Activated B cell treated with CpG ODN at 0.5 μM for 24 hours (primary cell): ENCODE measurements at regions of chr22 and their contacts with region 1.

Region 1: DNA sequence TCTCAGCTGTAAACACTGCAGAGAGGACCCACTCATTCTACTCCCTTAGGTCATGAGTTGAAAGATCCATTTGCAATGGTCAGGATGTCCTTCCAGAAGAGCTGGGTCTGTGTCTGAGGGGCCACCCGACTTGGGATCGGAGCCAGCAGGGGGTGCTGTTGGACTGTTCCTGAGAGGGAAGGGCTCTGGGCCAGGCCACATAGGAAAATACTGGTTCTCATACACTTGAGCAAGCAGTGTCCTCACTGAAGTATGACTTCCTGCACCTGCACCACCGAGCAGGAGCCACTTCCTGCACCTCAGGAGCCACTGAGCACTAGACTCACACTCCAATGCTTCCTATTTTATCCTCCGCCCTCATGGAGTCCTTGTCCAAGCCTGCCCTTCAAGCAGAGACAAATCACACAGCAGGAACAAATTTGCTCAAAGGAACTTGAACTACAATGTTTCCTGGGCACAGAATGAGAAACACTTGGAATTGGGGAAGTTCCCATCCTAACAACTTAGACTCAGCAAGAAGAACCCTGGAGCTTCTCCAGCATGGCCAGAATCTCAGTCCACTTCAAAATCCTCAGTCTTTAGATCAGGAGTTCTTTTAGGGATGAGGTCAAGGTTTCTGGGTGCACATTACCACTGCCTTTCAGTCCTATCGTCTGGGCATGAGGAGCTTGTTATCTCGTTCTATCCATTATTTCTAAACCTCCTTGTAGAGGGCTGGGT is 36.6 kb upstream of the VPREB1 start:
- DNase-seq: peak; percentile 80
- ATAC-seq: peak; percentile 83
- H3K4me3 Mint-ChIP-seq: peak overlapping the region; percentile 70
- H3K27ac Mint-ChIP-seq: peak overlapping the region; percentile 90
- H3K4me1 Mint-ChIP-seq: peaks cover 56% of the 10 kb centered on the region
- H3K27me3 Mint-ChIP-seq: no peaks in the 10 kb centered on the region
- CTCF ChIP-seq: no peak

Region 2: GRCh38 chr22:21690401-21690801 is 517.6 kb before region 1 on chr22:
- CTCF ChIA-PET with region 1: no interaction called
- POLR2A ChIA-PET with region 1: no interaction called
- intact Hi-C with region 1: no loop called
- DNase-seq: no peak
- ATAC-seq: no peak
- H3K4me3 Mint-ChIP-seq: no peak overlapping the region
- H3K27ac Mint-ChIP-seq: peak overlapping the region; percentile 36
- H3K4me1 Mint-ChIP-seq: peaks cover 14% of the 10 kb centered on the region
- H3K27me3 Mint-ChIP-seq: no peaks in the 10 kb centered on the region
- CTCF ChIP-seq: no peak

Region 3: DNA sequence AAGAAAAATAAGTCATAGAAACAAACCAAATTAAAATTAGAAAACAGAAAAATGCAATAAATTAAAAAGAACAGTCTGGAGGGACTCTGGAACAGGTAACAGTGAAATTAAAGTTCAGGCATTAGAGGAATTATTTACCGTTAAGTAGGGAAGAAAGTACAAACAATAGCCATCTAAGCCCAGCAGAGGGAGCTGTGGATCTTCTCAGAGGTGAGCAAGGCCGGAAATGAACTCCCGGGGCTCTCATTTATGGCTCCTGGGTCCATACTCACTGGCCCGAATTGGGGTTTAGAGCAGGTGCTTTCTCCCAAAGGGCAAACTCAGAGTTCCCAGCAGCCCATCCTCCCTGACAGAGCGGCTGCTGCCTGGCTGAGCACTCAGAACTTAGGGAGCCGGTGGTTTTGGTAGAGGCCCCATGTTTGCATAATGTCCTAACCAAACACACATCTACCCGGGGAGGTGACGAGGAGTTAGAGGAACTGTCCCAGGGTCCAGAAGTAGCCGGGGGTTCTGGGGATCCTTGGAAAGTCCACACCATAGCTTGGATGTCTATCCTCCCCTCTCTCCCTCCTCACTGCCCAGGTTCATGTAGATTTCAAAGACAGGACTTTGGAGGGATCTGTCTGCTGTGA is 51.2 kb before region 1 on chr22:
- CTCF ChIA-PET with region 1: interaction called, 36 read pairs
- POLR2A ChIA-PET with region 1: interaction called, 9 read pairs
- intact Hi-C with region 1: loop called (anchors 1 kb)
- DNase-seq: peak; percentile 64
- ATAC-seq: peak; percentile 75
- H3K4me3 Mint-ChIP-seq: peak overlapping the region; percentile 78
- H3K27ac Mint-ChIP-seq: peak overlapping the region; percentile 98
- H3K4me1 Mint-ChIP-seq: peaks cover 52% of the 10 kb centered on the region
- H3K27me3 Mint-ChIP-seq: no peaks in the 10 kb centered on the region
- CTCF ChIP-seq: peak; percentile 81

Region 4: DNA sequence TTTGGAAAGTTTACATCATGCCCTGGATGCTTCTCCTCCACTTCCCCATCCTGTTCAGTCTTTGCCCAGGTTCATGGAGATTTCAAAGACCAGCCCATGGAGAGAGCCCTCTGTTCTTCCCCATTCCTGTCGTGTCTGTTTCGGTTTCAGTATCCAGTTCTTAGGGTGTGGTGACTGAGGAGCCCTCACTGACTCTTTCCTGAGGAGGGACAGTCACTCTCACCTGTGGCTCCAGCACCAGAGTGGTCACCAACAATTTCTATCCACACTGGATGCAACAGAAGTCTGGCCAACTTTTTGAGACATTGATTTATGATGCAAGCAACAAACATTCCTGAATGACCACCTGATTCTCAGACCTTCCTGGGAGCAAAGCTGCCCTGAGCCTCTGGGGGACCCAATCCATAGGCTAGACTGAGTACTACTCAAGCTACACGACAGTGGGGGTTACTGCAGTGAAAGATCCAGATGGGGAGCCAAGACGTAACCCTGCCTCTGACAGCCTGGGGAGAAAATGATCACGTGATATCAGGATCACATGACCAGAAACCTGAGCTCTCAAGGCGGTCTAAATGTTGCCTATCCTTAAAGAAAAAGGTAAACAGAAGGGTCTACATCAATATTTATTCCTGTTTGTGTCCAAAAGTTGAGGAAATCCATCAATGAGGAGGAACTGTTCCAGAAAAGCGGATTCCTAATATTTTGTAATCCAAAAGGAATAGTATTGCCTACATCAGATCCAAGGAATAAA is 39.6 kb before region 1 on chr22:
- CTCF ChIA-PET with region 1: interaction called, 22 read pairs
- POLR2A ChIA-PET with region 1: interaction called, 21 read pairs
- intact Hi-C with region 1: no loop called
- DNase-seq: peak; percentile 31
- ATAC-seq: peak; percentile 54
- H3K4me3 Mint-ChIP-seq: peak overlapping the region; percentile 84
- H3K27ac Mint-ChIP-seq: peak overlapping the region; percentile 97
- H3K4me1 Mint-ChIP-seq: peaks cover 86% of the 10 kb centered on the region
- H3K27me3 Mint-ChIP-seq: no peaks in the 10 kb centered on the region
- CTCF ChIP-seq: no peak

Region 5: GRCh38 chr22:22219140-22219996 is 11.4 kb after region 1 on chr22:
- CTCF ChIA-PET with region 1: interaction called, 3 read pairs
- POLR2A ChIA-PET with region 1: no interaction called
- intact Hi-C with region 1: loop called (anchors 2 kb)
- DNase-seq: no peak
- ATAC-seq: no peak
- H3K4me3 Mint-ChIP-seq: no peak overlapping the region
- H3K27ac Mint-ChIP-seq: no peak overlapping the region
- H3K4me1 Mint-ChIP-seq: peaks cover 42% of the 10 kb centered on the region
- H3K27me3 Mint-ChIP-seq: no peaks in the 10 kb centered on the region
- CTCF ChIP-seq: no peak

Region 6: DNA sequence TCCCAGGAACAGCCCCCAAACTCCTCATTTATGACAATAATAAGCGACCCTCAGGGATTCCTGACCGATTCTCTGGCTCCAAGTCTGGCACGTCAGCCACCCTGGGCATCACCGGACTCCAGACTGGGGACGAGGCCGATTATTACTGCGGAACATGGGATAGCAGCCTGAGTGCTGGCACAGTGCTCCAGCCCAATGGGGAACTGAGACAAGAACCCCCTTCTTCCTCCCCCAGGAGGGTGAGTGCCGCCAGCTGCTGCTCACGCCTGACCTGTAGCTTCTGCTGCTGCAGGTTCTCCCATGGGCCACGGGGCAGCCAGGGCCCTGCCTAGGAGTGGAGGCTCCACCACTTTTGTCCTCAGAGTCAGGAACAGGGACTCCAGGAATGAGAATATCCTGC is 114.8 kb after region 1 on chr22:
- CTCF ChIA-PET with region 1: interaction called, 12 read pairs
- POLR2A ChIA-PET with region 1: no interaction called
- intact Hi-C with region 1: loop called (anchors 1 kb)
- DNase-seq: no peak
- ATAC-seq: peak; percentile 11
- H3K4me3 Mint-ChIP-seq: peak overlapping the region; percentile 15
- H3K27ac Mint-ChIP-seq: no peak overlapping the region
- H3K4me1 Mint-ChIP-seq: peaks cover 43% of the 10 kb centered on the region
- H3K27me3 Mint-ChIP-seq: no peaks in the 10 kb centered on the region
- CTCF ChIP-seq: no peak

Region 7: GRCh38 chr22:22380098-22381030 is 172.4 kb after region 1 on chr22:
- CTCF ChIA-PET with region 1: no interaction called
- POLR2A ChIA-PET with region 1: no interaction called
- intact Hi-C with region 1: no loop called
- DNase-seq: peak; percentile 46
- ATAC-seq: peak; percentile 80
- H3K4me3 Mint-ChIP-seq: peak overlapping the region; percentile 61
- H3K27ac Mint-ChIP-seq: peak overlapping the region; percentile 86
- H3K4me1 Mint-ChIP-seq: peaks cover 79% of the 10 kb centered on the region
- H3K27me3 Mint-ChIP-seq: no peaks in the 10 kb centered on the region
- CTCF ChIP-seq: no peak

Region 8: DNA sequence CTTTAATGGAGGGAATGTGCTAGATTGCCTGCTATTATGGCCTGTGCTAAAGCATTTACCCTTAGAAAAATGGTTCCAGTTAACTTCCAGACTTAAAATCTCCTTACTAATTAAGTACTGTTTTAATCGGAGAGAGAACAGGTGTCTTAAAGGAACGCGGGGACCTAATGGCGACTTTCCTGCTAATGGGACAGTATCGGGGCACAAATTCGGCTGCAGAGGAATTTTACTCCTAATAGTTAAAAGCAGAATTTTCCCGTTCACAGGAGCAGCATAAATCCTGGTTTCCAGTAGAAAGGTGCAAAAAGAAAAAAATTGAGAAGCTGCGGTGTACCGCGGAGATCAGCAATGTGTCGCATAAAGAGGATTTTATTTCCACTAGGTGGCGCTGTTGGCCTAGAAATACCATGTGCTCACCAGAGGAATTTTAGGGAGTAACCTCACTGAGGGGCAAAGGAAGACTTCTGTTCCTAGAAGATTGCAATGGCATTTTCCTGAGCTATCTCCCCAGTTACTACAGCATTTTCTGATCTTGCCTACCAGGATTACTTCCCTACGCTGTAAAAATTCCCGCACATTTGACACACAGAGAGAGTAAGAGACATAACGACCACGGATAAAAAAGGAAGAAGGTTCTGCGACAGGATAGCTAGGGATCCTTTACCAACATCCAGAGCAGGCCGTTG is 256.0 kb after region 1 on chr22:
- CTCF ChIA-PET with region 1: interaction called, 4 read pairs
- POLR2A ChIA-PET with region 1: no interaction called
- intact Hi-C with region 1: loop called (anchors 1 kb)
- DNase-seq: no peak
- ATAC-seq: peak; percentile 61
- H3K4me3 Mint-ChIP-seq: peak overlapping the region; percentile 24
- H3K27ac Mint-ChIP-seq: peak overlapping the region; percentile 61
- H3K4me1 Mint-ChIP-seq: peaks cover 19% of the 10 kb centered on the region
- H3K27me3 Mint-ChIP-seq: peaks cover 4% of the 10 kb centered on the region
- CTCF ChIP-seq: peak; percentile 76